Activated CD4-positive, alpha-beta T cell treated with anti-CD3 and anti-CD28 coated beads, Interleukin-2, amount 10 ng/mL, durations not matched to agents 24 days and 14 days (primary cell): ENCODE measurements at regions of chr22 and their contacts with region 1.

Region 1: DNA sequence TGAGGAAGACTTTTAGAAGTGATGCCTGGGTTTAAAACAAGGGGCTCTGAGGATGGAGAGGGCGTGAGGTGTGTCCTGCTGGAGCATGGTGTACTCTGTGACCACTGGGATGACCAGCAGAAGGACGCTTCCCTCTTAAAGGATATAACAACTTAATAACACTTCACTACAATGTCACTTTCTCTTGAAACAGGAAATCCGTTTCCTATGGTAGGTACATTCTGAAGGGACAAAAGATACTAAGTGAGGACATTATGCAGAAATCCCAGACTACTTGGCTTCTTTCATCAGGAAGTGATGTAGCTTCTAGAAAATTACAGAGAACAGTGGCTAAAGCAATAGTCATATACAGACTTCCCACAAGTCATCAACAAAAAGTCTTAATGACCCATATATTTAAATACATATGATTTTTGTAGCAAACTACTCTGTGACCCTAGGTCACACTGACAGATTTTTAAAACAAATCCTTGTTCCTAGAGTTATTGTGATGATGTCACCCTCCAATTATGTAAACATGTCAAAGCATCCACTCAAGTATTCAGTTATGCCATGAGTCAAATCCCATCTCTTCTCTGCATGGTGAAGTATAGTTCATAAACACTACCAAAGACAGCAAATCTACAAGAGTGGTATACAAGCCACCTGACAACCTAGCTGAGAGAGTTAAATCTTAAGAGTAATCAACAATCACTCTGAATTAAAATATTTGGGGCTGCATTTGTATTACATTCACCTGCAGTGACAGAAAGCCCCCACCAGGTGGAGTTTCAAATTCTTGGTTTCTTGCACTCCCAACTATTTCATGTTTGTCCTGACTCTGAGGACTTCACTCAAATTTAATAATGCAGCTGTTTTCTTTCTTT is 32.8 kb downstream of the PITPNB start:
- DNase-seq: peak; percentile 81
- H3K4me3 Mint-ChIP-seq: no peak overlapping the region
- H3K27ac Mint-ChIP-seq: no peak overlapping the region
- H3K4me1 Mint-ChIP-seq: peaks cover 5% of the 10 kb centered on the region
- H3K27me3 Mint-ChIP-seq: no peaks in the 10 kb centered on the region

Region 2: GRCh38 chr22:28009272-28009827 is 123.1 kb after region 1 on chr22:
- intact Hi-C with region 1: loop called (anchors 1 kb)
- DNase-seq: peak; percentile 92
- H3K4me3 Mint-ChIP-seq: no peak overlapping the region
- H3K27ac Mint-ChIP-seq: no peak overlapping the region
- H3K4me1 Mint-ChIP-seq: no peaks in the 10 kb centered on the region
- H3K27me3 Mint-ChIP-seq: no peaks in the 10 kb centered on the region